CD4-positive, alpha-beta memory T cell (primary cell): ENCODE measurements at regions of chr4 and their contacts with region 1.

Region 1: DNA sequence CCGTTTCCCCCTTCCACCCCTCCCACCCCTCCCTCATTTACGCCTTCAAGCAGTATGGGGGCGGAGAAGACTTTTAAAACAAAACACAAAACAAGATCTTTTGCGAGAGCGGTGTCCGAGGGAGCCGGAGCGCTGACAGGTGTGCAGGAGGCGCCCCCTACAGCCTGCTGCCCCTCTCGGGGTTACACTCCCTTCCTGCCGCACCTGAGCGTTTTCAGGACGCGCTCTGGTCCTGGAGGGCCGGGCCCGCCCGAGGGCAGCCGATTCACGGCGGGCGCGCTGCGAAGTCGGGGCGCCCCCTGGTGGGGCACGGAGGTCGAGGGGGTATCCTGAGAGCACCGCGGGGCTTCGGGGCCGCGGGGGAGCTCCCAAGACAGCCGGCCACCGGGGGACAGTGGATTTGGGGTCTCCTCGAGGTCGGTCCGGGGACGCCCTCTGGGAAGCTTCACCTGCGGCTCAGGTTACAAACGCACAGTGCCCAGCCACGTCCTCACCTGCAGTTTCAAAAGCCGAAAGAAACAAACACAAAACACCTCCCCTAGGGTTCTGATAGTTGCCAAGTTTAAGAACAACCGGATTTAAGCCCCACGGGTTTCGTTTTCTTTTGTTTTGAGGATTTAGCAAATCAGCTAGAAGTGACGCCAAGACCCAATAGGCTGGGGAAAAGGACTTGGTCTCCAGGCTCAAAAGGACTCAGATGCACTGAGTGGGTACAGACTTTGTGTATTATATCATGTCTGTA is 8.0 kb upstream of the NEUROG2 start:
- DNase-seq: peak; percentile 66 to 74 (median 67)
- H3K4me3 ChIP-seq: peak overlapping the region; percentile 20 to 46
- H3K4me3 Mint-ChIP-seq: peak overlapping the region; percentile 81 to 94 (median 86)
- H3K27ac ChIP-seq: no peak overlapping the region
- H3K27ac Mint-ChIP-seq: peak overlapping the region in 1 of 7 donors; percentile 65
- H3K4me1 ChIP-seq: peaks cover 24% of the 10 kb centered on the region
- H3K4me1 Mint-ChIP-seq: peaks cover 9 to 51% (median 19%) of the 10 kb centered on the region in 4 donors
- H3K27me3 ChIP-seq: peaks cover 45% of the 10 kb centered on the region
- H3K27me3 Mint-ChIP-seq: peaks cover 44 to 46% of the 10 kb centered on the region in 2 donors

Region 2: DNA sequence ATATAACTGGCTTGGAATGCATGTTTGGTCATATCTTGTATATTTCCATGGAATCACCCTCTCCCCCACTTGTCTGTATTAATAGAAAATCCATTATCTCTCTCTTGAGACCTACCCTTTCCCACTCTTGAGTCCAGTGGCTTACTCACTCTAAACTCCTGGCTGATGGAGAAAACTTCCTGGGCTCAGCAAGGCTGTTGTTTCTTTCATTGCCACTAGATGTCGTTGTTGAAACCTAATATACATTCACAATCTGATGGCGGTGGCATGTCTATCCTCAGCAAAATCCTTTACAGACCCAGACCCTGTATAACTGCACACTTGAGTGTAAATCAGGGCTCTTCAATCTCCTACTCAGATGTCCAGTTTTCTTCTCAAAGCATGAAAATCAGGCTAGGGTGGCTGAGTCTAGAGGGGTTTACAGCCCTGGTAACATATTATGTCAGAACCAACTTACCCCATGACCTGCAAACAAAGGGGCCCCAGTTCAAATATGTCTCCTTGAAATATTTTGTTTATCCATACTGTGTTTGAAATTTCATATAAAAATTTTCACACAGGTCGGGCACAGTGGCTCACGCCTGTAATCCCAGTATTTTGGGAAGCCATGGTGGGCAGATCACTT is 448.7 kb before region 1 on chr4:
- CTCF ChIA-PET with region 1: no interaction called
- POLR2A ChIA-PET with region 1: no interaction called
- intact Hi-C with region 1: loop called (anchors 1 kb)
- DNase-seq: peak in 4 of 5 donors; percentile 17 to 37 (median 26)
- H3K4me3 ChIP-seq: no peak overlapping the region
- H3K4me3 Mint-ChIP-seq: no peak overlapping the region
- H3K27ac ChIP-seq: no peak overlapping the region
- H3K27ac Mint-ChIP-seq: no peak overlapping the region
- H3K4me1 ChIP-seq: no peaks in the 10 kb centered on the region
- H3K4me1 Mint-ChIP-seq: no peaks in the 10 kb centered on the region
- H3K27me3 ChIP-seq: no peaks in the 10 kb centered on the region
- H3K27me3 Mint-ChIP-seq: peaks cover 6% of the 10 kb centered on the region in 2 donors

Region 3: GRCh38 chr4:112189754-112190153 is 334.2 kb before region 1 on chr4:
- CTCF ChIA-PET with region 1: no interaction called
- POLR2A ChIA-PET with region 1: no interaction called
- intact Hi-C with region 1: no loop called
- DNase-seq: no peak
- H3K4me3 ChIP-seq: no peak overlapping the region
- H3K4me3 Mint-ChIP-seq: no peak overlapping the region
- H3K27ac ChIP-seq: no peak overlapping the region
- H3K27ac Mint-ChIP-seq: no peak overlapping the region
- H3K4me1 ChIP-seq: no peaks in the 10 kb centered on the region
- H3K4me1 Mint-ChIP-seq: peaks cover 0 to 3% (median 0%) of the 10 kb centered on the region in 4 donors
- H3K27me3 ChIP-seq: no peaks in the 10 kb centered on the region
- H3K27me3 Mint-ChIP-seq: no peaks in the 10 kb centered on the region

Region 4: DNA sequence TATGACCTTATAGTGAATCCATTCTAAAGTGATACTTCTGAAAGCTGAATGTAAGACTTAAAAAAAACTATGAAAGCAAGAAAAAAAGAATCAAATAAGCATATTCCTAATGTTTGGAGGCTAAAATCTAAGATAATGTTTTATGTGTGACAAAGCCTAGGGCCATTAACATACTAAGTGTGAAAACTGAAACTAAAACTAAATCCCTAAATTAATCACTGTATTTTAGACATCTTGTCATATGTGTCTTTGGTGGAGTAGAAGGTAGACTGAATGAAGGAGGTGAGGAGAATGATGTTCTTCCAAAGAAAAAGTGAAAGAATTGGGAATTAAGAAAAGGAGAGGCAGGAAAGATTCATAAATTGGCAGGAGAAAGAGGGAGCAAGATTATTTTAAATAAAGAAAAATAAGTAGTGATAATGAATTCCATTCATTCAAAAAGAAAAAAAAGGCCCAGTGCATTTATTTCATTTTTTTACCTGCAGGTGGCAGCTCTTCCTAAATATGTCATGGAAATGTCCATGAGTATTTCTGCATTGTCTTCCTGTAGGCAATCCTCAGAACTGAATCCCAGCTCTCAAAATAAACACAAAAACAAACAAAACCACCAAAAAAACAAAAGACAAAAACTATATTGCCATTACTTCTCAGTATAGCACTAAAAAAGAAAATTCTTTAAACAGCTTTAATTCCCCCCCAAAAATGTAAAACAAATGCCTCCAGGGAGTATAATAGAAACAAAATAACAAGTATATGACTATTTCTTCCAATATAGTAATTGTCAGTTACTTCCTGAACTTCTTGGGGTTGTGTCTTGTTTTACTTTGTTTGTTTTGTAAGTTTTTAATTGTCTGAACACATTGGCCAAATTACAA is 309.3 kb before region 1 on chr4:
- CTCF ChIA-PET with region 1: interaction called, 67 read pairs
- POLR2A ChIA-PET with region 1: interaction called, 3 read pairs
- intact Hi-C with region 1: loop called (anchors 1 kb)
- DNase-seq: peak in 4 of 5 donors; percentile 17 to 24 (median 20)
- H3K4me3 ChIP-seq: no peak overlapping the region
- H3K4me3 Mint-ChIP-seq: no peak overlapping the region
- H3K27ac ChIP-seq: no peak overlapping the region
- H3K27ac Mint-ChIP-seq: peak overlapping the region in 2 of 7 donors; percentile 2 to 26
- H3K4me1 ChIP-seq: no peaks in the 10 kb centered on the region
- H3K4me1 Mint-ChIP-seq: peaks cover 0 to 5% (median 2%) of the 10 kb centered on the region in 4 donors
- H3K27me3 ChIP-seq: no peaks in the 10 kb centered on the region
- H3K27me3 Mint-ChIP-seq: no peaks in the 10 kb centered on the region

Region 5: GRCh38 chr4:112321776-112322684 is 201.9 kb before region 1 on chr4:
- CTCF ChIA-PET with region 1: interaction called, 35 read pairs
- POLR2A ChIA-PET with region 1: no interaction called
- intact Hi-C with region 1: no loop called
- DNase-seq: peak; percentile 71 to 80 (median 73)
- H3K4me3 ChIP-seq: no peak overlapping the region
- H3K4me3 Mint-ChIP-seq: peak overlapping the region in 7 of 8 donors; percentile 33 to 73 (median 51)
- H3K27ac ChIP-seq: no peak overlapping the region
- H3K27ac Mint-ChIP-seq: peak overlapping the region in 2 of 7 donors; percentile 46 to 77
- H3K4me1 ChIP-seq: peaks cover 8% of the 10 kb centered on the region
- H3K4me1 Mint-ChIP-seq: peaks cover 5 to 15% (median 8%) of the 10 kb centered on the region in 4 donors
- H3K27me3 ChIP-seq: no peaks in the 10 kb centered on the region
- H3K27me3 Mint-ChIP-seq: no peaks in the 10 kb centered on the region

Region 6: GRCh38 chr4:112327965-112328733 is 195.8 kb before region 1 on chr4:
- CTCF ChIA-PET with region 1: interaction called, 35 read pairs
- POLR2A ChIA-PET with region 1: no interaction called
- intact Hi-C with region 1: loop called (anchors 1 kb)
- DNase-seq: peak in 4 of 5 donors; percentile 38 to 50 (median 45)
- H3K4me3 ChIP-seq: no peak overlapping the region
- H3K4me3 Mint-ChIP-seq: peak overlapping the region in 5 of 8 donors; percentile 0 to 60 (median 37)
- H3K27ac ChIP-seq: no peak overlapping the region
- H3K27ac Mint-ChIP-seq: peak overlapping the region in 1 of 7 donors; percentile 49
- H3K4me1 ChIP-seq: no peaks in the 10 kb centered on the region
- H3K4me1 Mint-ChIP-seq: peaks cover under 1 to 8% (median 6%) of the 10 kb centered on the region in 4 donors
- H3K27me3 ChIP-seq: no peaks in the 10 kb centered on the region
- H3K27me3 Mint-ChIP-seq: no peaks in the 10 kb centered on the region

Region 7: DNA sequence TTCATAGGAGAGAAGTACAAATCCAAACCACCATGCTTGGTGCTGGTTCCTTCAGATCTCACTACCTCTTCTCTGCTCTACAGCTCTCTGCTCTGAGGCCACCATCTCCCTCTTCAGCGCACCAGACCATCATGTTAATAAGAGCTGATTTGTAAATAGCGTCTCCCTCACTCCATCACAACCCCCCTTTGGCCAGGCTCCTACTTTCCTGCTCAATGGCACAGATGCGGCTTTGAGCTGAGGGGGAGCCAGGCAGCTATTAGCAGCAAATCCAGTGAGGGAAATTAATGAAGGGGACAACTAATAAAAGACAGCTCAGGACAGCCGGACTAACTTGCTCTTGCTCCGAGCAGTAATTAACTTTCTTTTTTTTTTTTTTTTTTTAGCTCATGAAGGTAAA is 21.1 kb before region 1 on chr4:
- CTCF ChIA-PET with region 1: interaction called, 21 read pairs
- POLR2A ChIA-PET with region 1: no interaction called
- intact Hi-C with region 1: no loop called
- DNase-seq: no peak
- H3K4me3 ChIP-seq: no peak overlapping the region
- H3K4me3 Mint-ChIP-seq: no peak overlapping the region
- H3K27ac ChIP-seq: no peak overlapping the region
- H3K27ac Mint-ChIP-seq: no peak overlapping the region
- H3K4me1 ChIP-seq: no peaks in the 10 kb centered on the region
- H3K4me1 Mint-ChIP-seq: no peaks in the 10 kb centered on the region
- H3K27me3 ChIP-seq: peaks cover under 1% of the 10 kb centered on the region
- H3K27me3 Mint-ChIP-seq: peaks cover 32 to 40% of the 10 kb centered on the region in 2 donors